Mammary epithelial cell (primary cell): ENCODE measurements at regions of chr11 and their contacts with region 1.

Region 1: DNA sequence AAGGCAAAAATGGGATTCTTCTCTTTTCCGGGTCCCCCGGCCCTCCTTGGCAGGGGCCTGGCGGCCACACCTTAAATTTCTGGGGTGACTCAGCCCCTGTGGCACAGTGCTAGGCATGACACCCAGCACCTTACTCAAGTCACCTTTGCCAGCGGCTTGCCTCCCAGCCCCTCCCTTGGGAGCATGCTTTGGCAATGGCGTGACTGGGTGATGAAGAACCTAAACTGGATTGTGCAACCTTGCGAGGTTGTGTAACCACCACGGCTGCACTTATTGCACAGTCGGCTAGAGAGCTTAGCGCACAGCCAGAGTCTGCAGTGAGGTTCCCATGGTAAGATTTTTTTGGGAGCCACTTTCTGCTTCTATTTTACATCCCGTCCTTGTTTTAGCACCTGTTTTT is 16.1 kb upstream of the LDLRAD3 start:
- DNase-seq: peak; percentile 94
- H3K4me3 ChIP-seq: peak overlapping the region in 1 of 3 experiments; percentile 5
- H3K27ac ChIP-seq: peak overlapping the region; percentile 69
- H3K4me1 ChIP-seq: peaks cover 28% of the 10 kb centered on the region
- H3K27me3 ChIP-seq: no peaks in the 10 kb centered on the region
- CTCF ChIP-seq: no peak

Region 2: DNA sequence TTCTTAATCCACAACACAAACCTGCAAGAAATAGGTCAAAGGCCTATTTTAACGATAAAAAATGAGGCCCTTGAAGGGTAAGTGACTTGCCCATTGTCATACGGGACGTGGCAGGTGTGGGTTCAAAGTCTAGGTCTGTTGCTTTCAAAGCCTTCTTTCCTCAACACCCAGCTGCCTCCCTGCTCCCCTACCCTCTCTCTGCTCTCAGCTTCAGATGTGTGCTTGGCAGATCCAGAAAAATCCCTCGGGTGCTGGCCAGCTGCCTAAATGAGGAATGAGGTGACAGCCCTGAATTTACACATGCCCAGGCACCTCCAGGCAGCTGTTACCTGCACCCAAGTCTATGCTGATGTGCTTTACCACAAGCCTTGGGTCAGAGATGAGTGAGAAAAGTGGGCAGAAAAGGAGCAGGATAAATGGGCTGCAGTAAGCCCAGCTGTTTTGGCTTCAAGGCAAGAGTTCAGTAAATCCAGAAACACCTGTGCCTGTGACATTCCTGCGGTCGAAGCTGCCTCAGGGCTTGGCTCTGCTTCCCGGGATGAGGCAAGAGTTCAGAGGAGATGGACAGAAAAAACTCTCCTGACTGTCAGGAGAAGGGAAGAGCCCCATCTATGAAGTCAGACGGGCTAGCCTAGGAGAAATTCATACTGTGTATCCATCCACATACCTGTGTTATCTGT is 33.8 kb before region 1 on chr11:
- CTCF ChIA-PET with region 1: no interaction called
- dilution Hi-C with region 1: no loop called
- in situ Hi-C with region 1: no loop called
- intact Hi-C with region 1: loop called (anchors 1 kb)
- DNase-seq: peak; percentile 98
- H3K4me3 ChIP-seq: no peak overlapping the region
- H3K27ac ChIP-seq: no peak overlapping the region
- H3K4me1 ChIP-seq: peaks cover 17% of the 10 kb centered on the region
- H3K27me3 ChIP-seq: no peaks in the 10 kb centered on the region
- CTCF ChIP-seq: no peak

Region 3: DNA sequence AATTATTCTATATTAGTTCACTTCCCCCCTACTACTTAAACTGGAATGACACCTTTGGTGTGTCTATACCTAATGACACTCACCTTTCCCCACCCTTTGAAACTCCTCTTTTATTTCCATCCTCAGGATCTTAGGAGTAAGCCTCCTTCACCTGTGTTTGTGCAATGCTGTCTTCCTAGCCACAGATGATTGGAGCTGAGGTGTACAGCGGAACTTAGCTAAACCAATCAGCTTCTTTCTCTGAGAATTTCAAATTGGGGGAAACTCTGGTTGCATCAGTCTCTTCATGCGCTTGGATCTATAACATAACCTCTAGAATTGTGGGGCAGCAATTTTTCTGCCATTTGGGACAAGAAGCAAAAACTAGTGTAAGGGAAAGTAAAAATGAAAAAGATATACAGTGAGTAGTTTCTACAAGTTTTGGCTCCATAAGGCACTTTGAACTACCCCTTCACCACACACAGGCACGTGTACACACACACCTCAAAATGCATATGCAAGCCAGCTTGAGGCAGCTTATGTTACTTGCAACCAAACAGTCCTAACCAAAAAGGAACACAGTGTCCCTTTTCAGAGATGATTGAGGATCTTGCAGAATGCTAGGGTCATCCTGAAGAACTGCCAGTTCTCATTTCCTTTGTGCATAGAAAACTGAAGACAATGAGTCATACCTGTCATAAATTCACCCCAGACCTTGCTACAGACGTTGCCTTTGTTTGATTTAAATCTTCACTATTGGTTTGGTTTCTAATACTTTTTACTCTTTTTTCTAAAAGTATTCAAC is 19.9 kb before region 1 on chr11:
- CTCF ChIA-PET with region 1: no interaction called
- dilution Hi-C with region 1: no loop called
- in situ Hi-C with region 1: no loop called
- intact Hi-C with region 1: no loop called
- DNase-seq: peak; percentile 83
- H3K4me3 ChIP-seq: no peak overlapping the region
- H3K27ac ChIP-seq: peak overlapping the region; percentile 72
- H3K4me1 ChIP-seq: peaks cover 32% of the 10 kb centered on the region
- H3K27me3 ChIP-seq: no peaks in the 10 kb centered on the region
- CTCF ChIP-seq: no peak